Activated CD8-positive, alpha-beta T cell treated with anti-CD3 and anti-CD28 coated beads, Interleukin-2, amount 10 ng/mL, durations not matched to agents 7 days and 5 days (primary cell): ENCODE measurements at regions of chr19 and their contacts with region 1.

Region 1: GRCh38 chr19:55503502-55504251 is 15.4 kb downstream of the SSC5D start:
- DNase-seq: peak; percentile 93
- ATAC-seq: peak; percentile 94
- H3K4me3 Mint-ChIP-seq: peak overlapping the region; percentile 70
- H3K27ac Mint-ChIP-seq: peak overlapping the region; percentile 85
- H3K4me1 Mint-ChIP-seq: peaks cover 19% of the 10 kb centered on the region
- H3K27me3 Mint-ChIP-seq: no peaks in the 10 kb centered on the region

Region 2: DNA sequence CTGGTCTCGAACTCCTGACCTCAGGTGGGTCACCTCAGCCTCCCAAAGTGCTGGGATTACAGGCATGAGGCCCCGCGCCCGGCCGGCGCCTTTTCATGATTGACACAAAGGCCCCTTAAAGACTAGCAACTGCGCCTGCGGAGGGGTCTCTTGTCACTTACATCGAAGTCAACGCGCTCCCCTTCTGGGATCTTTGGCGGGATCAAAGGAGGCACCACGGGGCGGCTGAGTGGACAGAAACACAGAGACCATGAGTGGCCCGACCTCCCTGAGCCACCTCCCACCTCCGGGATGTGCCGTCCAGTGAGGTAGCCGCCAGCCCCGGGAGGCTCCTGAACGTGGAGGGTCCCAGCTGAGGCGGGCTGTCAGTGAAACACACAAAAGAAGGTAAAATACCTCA is 362.0 kb before region 1 on chr19:
- CTCF ChIA-PET with region 1: interaction called, 38 read pairs
- POLR2A ChIA-PET with region 1: no interaction called
- DNase-seq: no peak
- ATAC-seq: no peak
- H3K4me3 Mint-ChIP-seq: no peak overlapping the region
- H3K27ac Mint-ChIP-seq: no peak overlapping the region
- H3K4me1 Mint-ChIP-seq: peaks cover 7% of the 10 kb centered on the region
- H3K27me3 Mint-ChIP-seq: peaks cover 20% of the 10 kb centered on the region

Region 3: GRCh38 chr19:55301459-55302317 is 202.0 kb before region 1 on chr19:
- CTCF ChIA-PET with region 1: interaction called, 13 read pairs
- POLR2A ChIA-PET with region 1: no interaction called
- DNase-seq: peak; percentile 97
- ATAC-seq: peak; percentile 94
- H3K4me3 Mint-ChIP-seq: peak overlapping the region; percentile 80
- H3K27ac Mint-ChIP-seq: peak overlapping the region; percentile 89
- H3K4me1 Mint-ChIP-seq: peaks cover 18% of the 10 kb centered on the region
- H3K27me3 Mint-ChIP-seq: peaks cover 3% of the 10 kb centered on the region

Region 4: GRCh38 chr19:55467236-55468053 is 36.2 kb before region 1 on chr19:
- CTCF ChIA-PET with region 1: interaction called, 75 read pairs
- POLR2A ChIA-PET with region 1: no interaction called
- DNase-seq: peak; percentile 71
- ATAC-seq: peak; percentile 89
- H3K4me3 Mint-ChIP-seq: no peak overlapping the region
- H3K27ac Mint-ChIP-seq: no peak overlapping the region
- H3K4me1 Mint-ChIP-seq: peaks cover 3% of the 10 kb centered on the region
- H3K27me3 Mint-ChIP-seq: no peaks in the 10 kb centered on the region

Region 5: GRCh38 chr19:55516878-55517620 is 13.4 kb after region 1 on chr19:
- CTCF ChIA-PET with region 1: interaction called, 12 read pairs
- POLR2A ChIA-PET with region 1: no interaction called
- DNase-seq: peak; percentile 93
- ATAC-seq: peak; percentile 100
- H3K4me3 Mint-ChIP-seq: peak overlapping the region; percentile 49
- H3K27ac Mint-ChIP-seq: peak overlapping the region; percentile 73
- H3K4me1 Mint-ChIP-seq: peaks cover 5% of the 10 kb centered on the region
- H3K27me3 Mint-ChIP-seq: no peaks in the 10 kb centered on the region

Region 6: DNA sequence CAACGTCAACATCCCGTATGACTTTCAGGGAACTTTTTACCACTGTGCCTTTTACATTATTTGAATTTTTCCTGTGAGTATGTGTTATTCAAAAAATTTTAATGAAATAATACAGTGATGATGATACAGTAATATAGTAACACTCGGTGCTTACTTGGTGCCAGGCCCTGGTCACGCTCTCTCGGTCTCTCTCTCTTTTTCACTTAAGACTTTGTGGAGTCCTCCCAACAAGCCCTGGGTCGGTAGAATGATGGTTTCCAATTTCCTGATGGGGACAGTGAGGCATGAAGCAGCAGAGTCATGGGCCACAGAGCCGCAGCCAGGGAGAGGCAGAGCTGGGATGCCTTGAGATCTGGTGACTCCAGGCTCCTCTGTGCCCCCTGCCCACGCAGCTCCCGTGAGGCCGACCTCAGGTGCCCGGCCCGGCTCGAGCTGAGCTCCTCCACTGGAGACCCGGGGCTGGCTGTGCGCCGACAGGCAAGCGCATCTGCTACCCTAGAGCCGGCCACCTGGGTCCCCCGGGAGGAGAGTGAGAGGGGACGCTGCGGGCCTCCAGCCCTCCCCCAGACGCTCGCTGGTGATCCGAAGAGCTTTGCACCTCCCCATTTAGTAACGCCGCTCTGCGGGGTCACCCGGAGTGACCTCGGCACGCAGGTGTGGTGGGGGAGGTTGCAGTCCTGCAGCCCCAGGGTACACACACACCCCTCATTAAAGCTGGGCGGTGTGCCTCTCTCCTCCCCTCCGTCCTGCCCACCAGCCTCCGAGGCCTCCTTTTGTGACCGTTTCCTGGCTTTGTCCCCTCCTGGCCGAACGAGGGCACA is 46.0 kb after region 1 on chr19:
- CTCF ChIA-PET with region 1: no interaction called
- POLR2A ChIA-PET with region 1: no interaction called
- DNase-seq: no peak
- ATAC-seq: no peak
- H3K4me3 Mint-ChIP-seq: no peak overlapping the region
- H3K27ac Mint-ChIP-seq: no peak overlapping the region
- H3K4me1 Mint-ChIP-seq: no peaks in the 10 kb centered on the region
- H3K27me3 Mint-ChIP-seq: peaks cover 3% of the 10 kb centered on the region

Region 7: GRCh38 chr19:55624109-55625003 is 120.7 kb after region 1 on chr19 and contains the start of gene ZNF784:
- CTCF ChIA-PET with region 1: interaction called, 27 read pairs
- POLR2A ChIA-PET with region 1: no interaction called
- DNase-seq: peak; percentile 94
- ATAC-seq: peak; percentile 62
- H3K4me3 Mint-ChIP-seq: peak within 1 kb of the TSS; percentile 85
- H3K27ac Mint-ChIP-seq: peak within 1 kb of the TSS; percentile 98
- H3K4me1 Mint-ChIP-seq: peaks cover 57% of the 10 kb centered on the region
- H3K27me3 Mint-ChIP-seq: peaks cover 13% of the 10 kb centered on the region
- total RNA-seq, gene ZNF784: 5.2 to 5.3 TPM